ENCODE measurements at regions of chr10 and their contacts with region 1.

Region 1: GRCh38 chr10:74255888-74256357 is 104.9 kb downstream of the ADK start:
- DNase-seq: no peak
- H3K4me3 ChIP-seq: no peak overlapping the region
- H3K4me3 Mint-ChIP-seq: no peak overlapping the region
- H3K27ac ChIP-seq: no peak overlapping the region
- H3K27ac Mint-ChIP-seq: peak overlapping the region in 3 of 8 donors; percentile 6 to 89 (median 8)
- H3K4me1 ChIP-seq: no peaks in the 10 kb centered on the region
- H3K4me1 Mint-ChIP-seq: peaks cover 2 to 13% (median 10%) of the 10 kb centered on the region in 3 donors
- H3K27me3 ChIP-seq: no peaks in the 10 kb centered on the region
- H3K27me3 Mint-ChIP-seq: no peaks in the 10 kb centered on the region

Region 2: GRCh38 chr10:75020168-75020567 is 764.2 kb after region 1 on chr10:
- CTCF ChIA-PET with region 1: no interaction called
- POLR2A ChIA-PET with region 1: interaction called, 10 read pairs
- DNase-seq: no peak
- H3K4me3 ChIP-seq: no peak overlapping the region
- H3K4me3 Mint-ChIP-seq: no peak overlapping the region
- H3K27ac ChIP-seq: no peak overlapping the region
- H3K27ac Mint-ChIP-seq: peak overlapping the region in 2 of 8 donors; percentile 19 to 50
- H3K4me1 ChIP-seq: peaks cover 6% of the 10 kb centered on the region
- H3K4me1 Mint-ChIP-seq: peaks cover 23 to 34% (median 24%) of the 10 kb centered on the region in 3 donors
- H3K27me3 ChIP-seq: no peaks in the 10 kb centered on the region
- H3K27me3 Mint-ChIP-seq: no peaks in the 10 kb centered on the region